ENCODE measurements at regions of chr9 and their contacts with region 1.

Region 1: GRCh38 chr9:77841739-77842386 is 189.7 kb downstream of the GNAQ start:
- DNase-seq: peak in 1 of 9 experiments; percentile 24
- ATAC-seq: no peak
- H3K4me3 ChIP-seq: no peak overlapping the region
- H3K4me3 Mint-ChIP-seq: no peak overlapping the region
- H3K27ac ChIP-seq: no peak overlapping the region
- H3K27ac Mint-ChIP-seq: no peak overlapping the region
- H3K4me1 ChIP-seq: no peaks in the 10 kb centered on the region
- H3K4me1 Mint-ChIP-seq: peaks cover 15% of the 10 kb centered on the region
- H3K27me3 ChIP-seq: no peaks in the 10 kb centered on the region
- H3K27me3 Mint-ChIP-seq: no peaks in the 10 kb centered on the region
- CTCF ChIP-seq: no peak

Region 2: GRCh38 chr9:77194423-77194822 is 647.4 kb before region 1 on chr9:
- CTCF ChIA-PET with region 1: no interaction called
- POLR2A ChIA-PET with region 1: no interaction called
- intact Hi-C with region 1: no loop called
- DNase-seq: no peak
- ATAC-seq: no peak
- H3K4me3 ChIP-seq: no peak overlapping the region
- H3K4me3 Mint-ChIP-seq: no peak overlapping the region
- H3K27ac ChIP-seq: no peak overlapping the region
- H3K27ac Mint-ChIP-seq: no peak overlapping the region
- H3K4me1 ChIP-seq: no peaks in the 10 kb centered on the region
- H3K4me1 Mint-ChIP-seq: peaks cover 59% of the 10 kb centered on the region
- H3K27me3 ChIP-seq: no peaks in the 10 kb centered on the region
- H3K27me3 Mint-ChIP-seq: no peaks in the 10 kb centered on the region
- CTCF ChIP-seq: no peak

Region 3: GRCh38 chr9:77236693-77237092 is 605.2 kb before region 1 on chr9:
- CTCF ChIA-PET with region 1: no interaction called
- POLR2A ChIA-PET with region 1: no interaction called
- intact Hi-C with region 1: no loop called
- DNase-seq: no peak
- ATAC-seq: no peak
- H3K4me3 ChIP-seq: no peak overlapping the region
- H3K4me3 Mint-ChIP-seq: no peak overlapping the region
- H3K27ac ChIP-seq: no peak overlapping the region
- H3K27ac Mint-ChIP-seq: no peak overlapping the region
- H3K4me1 ChIP-seq: no peaks in the 10 kb centered on the region
- H3K4me1 Mint-ChIP-seq: no peaks in the 10 kb centered on the region
- H3K27me3 ChIP-seq: no peaks in the 10 kb centered on the region
- H3K27me3 Mint-ChIP-seq: no peaks in the 10 kb centered on the region
- CTCF ChIP-seq: no peak

Region 4: DNA sequence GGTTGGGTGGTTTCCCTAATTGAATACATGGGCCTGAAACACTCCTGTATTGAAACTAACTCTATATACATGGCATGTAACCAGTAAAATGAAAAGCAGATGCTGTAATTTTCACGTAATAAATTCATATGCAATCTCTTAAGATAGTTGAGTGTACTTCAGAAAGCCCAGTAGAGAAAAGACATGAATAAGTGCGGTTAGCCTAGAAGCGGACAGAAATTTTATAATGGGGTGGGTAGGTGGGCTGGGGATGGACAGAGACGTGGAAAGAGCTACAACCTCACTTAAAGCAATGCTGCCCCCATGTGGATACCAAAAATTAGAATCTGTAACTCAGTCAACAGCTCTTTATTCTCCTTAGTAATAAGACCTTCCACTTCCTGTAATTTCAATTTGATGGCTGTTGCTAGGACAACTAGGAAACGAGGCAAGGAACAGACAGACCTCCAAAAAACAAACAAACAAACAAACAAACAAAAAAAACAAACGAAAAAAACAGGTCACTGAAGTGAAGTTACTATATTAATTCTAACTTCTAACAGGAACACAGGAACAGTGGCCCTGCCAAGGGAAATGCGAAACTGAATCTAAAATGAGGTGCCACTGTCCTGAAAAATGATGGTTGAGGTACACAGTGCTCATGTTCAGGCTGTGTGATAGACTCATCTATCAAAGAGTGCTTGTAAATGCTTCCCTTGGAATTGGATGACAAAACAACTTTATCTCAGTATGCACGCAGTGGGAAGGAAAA is 90.3 kb before region 1 on chr9:
- CTCF ChIA-PET with region 1: no interaction called
- POLR2A ChIA-PET with region 1: no interaction called
- intact Hi-C with region 1: no loop called
- DNase-seq: peak in 2 of 9 experiments; percentile 17 to 33
- ATAC-seq: no peak
- H3K4me3 ChIP-seq: no peak overlapping the region
- H3K4me3 Mint-ChIP-seq: no peak overlapping the region
- H3K27ac ChIP-seq: no peak overlapping the region
- H3K27ac Mint-ChIP-seq: no peak overlapping the region
- H3K4me1 ChIP-seq: no peaks in the 10 kb centered on the region
- H3K4me1 Mint-ChIP-seq: peaks cover 20% of the 10 kb centered on the region
- H3K27me3 ChIP-seq: no peaks in the 10 kb centered on the region
- H3K27me3 Mint-ChIP-seq: no peaks in the 10 kb centered on the region
- CTCF ChIP-seq: no peak

Region 5: GRCh38 chr9:77826621-77827020 is 15.2 kb before region 1 on chr9:
- CTCF ChIA-PET with region 1: interaction called, 6 read pairs
- POLR2A ChIA-PET with region 1: interaction called, 3 read pairs
- intact Hi-C with region 1: loop called in 1 of 2 experiments (anchors 1 kb)
- DNase-seq: no peak
- ATAC-seq: no peak
- H3K4me3 ChIP-seq: no peak overlapping the region
- H3K4me3 Mint-ChIP-seq: no peak overlapping the region
- H3K27ac ChIP-seq: no peak overlapping the region
- H3K27ac Mint-ChIP-seq: no peak overlapping the region
- H3K4me1 ChIP-seq: peaks cover 9% of the 10 kb centered on the region
- H3K4me1 Mint-ChIP-seq: peaks cover 32% of the 10 kb centered on the region
- H3K27me3 ChIP-seq: no peaks in the 10 kb centered on the region
- H3K27me3 Mint-ChIP-seq: no peaks in the 10 kb centered on the region
- CTCF ChIP-seq: no peak